Activated CD4-positive, alpha-beta memory T cell treated with anti-CD3 and anti-CD28 coated beads for 36 hours (primary cell): ENCODE measurements at regions of chr21 and their contacts with region 1.

Region 1: GRCh38 chr21:35084869-35085268 is 35.8 kb upstream of the RUNX1 start:
- DNase-seq: no peak
- H3K4me3 Mint-ChIP-seq: no peak overlapping the region
- H3K27ac Mint-ChIP-seq: no peak overlapping the region
- H3K4me1 Mint-ChIP-seq: peaks cover 39% of the 10 kb centered on the region
- H3K27me3 Mint-ChIP-seq: no peaks in the 10 kb centered on the region

Region 2: GRCh38 chr21:34129039-34129891 is 955.6 kb before region 1 on chr21:
- CTCF ChIA-PET with region 1: no interaction called
- POLR2A ChIA-PET with region 1: no interaction called
- intact Hi-C with region 1: no loop called
- DNase-seq: peak; percentile 84
- H3K4me3 Mint-ChIP-seq: peak overlapping the region; percentile 59
- H3K27ac Mint-ChIP-seq: peak overlapping the region; percentile 92
- H3K4me1 Mint-ChIP-seq: peaks cover 70% of the 10 kb centered on the region
- H3K27me3 Mint-ChIP-seq: no peaks in the 10 kb centered on the region

Region 3: GRCh38 chr21:34967509-34968289 is 117.2 kb before region 1 on chr21:
- CTCF ChIA-PET with region 1: no interaction called
- POLR2A ChIA-PET with region 1: interaction called, 8 read pairs
- intact Hi-C with region 1: loop called (anchors 1 kb)
- DNase-seq: peak; percentile 75
- H3K4me3 Mint-ChIP-seq: peak overlapping the region; percentile 55
- H3K27ac Mint-ChIP-seq: peak overlapping the region; percentile 95
- H3K4me1 Mint-ChIP-seq: peaks cover 88% of the 10 kb centered on the region
- H3K27me3 Mint-ChIP-seq: no peaks in the 10 kb centered on the region

Region 4: GRCh38 chr21:35059742-35060141 is 25.1 kb before region 1 on chr21:
- CTCF ChIA-PET with region 1: no interaction called
- POLR2A ChIA-PET with region 1: interaction called, 4 read pairs
- intact Hi-C with region 1: loop called (anchors 1 kb)
- DNase-seq: no peak
- H3K4me3 Mint-ChIP-seq: no peak overlapping the region
- H3K27ac Mint-ChIP-seq: peak overlapping the region; percentile 15
- H3K4me1 Mint-ChIP-seq: peaks cover 37% of the 10 kb centered on the region
- H3K27me3 Mint-ChIP-seq: no peaks in the 10 kb centered on the region

Region 5: GRCh38 chr21:35138665-35139381 is 54.0 kb after region 1 on chr21:
- CTCF ChIA-PET with region 1: interaction called, 4 read pairs
- POLR2A ChIA-PET with region 1: interaction called, 3 read pairs
- intact Hi-C with region 1: loop called (anchors 2 kb)
- DNase-seq: peak; percentile 79
- H3K4me3 Mint-ChIP-seq: peak overlapping the region; percentile 68
- H3K27ac Mint-ChIP-seq: peak overlapping the region; percentile 90
- H3K4me1 Mint-ChIP-seq: peaks cover 29% of the 10 kb centered on the region
- H3K27me3 Mint-ChIP-seq: no peaks in the 10 kb centered on the region

Region 6: GRCh38 chr21:35226948-35227744 is 142.3 kb after region 1 on chr21:
- CTCF ChIA-PET with region 1: no interaction called
- POLR2A ChIA-PET with region 1: interaction called, 3 read pairs
- intact Hi-C with region 1: loop called (anchors 2 kb)
- DNase-seq: peak; percentile 76
- H3K4me3 Mint-ChIP-seq: peak overlapping the region; percentile 49
- H3K27ac Mint-ChIP-seq: peak overlapping the region; percentile 62
- H3K4me1 Mint-ChIP-seq: peaks cover 38% of the 10 kb centered on the region
- H3K27me3 Mint-ChIP-seq: no peaks in the 10 kb centered on the region